Activated CD4-positive, alpha-beta T cell treated with anti-CD3 and anti-CD28 coated beads, Interleukin-2, amount 10 ng/mL, durations not matched to agents 7 days and 5 days (primary cell): ENCODE measurements at regions of chr11 and their contacts with region 1.

Region 1: DNA sequence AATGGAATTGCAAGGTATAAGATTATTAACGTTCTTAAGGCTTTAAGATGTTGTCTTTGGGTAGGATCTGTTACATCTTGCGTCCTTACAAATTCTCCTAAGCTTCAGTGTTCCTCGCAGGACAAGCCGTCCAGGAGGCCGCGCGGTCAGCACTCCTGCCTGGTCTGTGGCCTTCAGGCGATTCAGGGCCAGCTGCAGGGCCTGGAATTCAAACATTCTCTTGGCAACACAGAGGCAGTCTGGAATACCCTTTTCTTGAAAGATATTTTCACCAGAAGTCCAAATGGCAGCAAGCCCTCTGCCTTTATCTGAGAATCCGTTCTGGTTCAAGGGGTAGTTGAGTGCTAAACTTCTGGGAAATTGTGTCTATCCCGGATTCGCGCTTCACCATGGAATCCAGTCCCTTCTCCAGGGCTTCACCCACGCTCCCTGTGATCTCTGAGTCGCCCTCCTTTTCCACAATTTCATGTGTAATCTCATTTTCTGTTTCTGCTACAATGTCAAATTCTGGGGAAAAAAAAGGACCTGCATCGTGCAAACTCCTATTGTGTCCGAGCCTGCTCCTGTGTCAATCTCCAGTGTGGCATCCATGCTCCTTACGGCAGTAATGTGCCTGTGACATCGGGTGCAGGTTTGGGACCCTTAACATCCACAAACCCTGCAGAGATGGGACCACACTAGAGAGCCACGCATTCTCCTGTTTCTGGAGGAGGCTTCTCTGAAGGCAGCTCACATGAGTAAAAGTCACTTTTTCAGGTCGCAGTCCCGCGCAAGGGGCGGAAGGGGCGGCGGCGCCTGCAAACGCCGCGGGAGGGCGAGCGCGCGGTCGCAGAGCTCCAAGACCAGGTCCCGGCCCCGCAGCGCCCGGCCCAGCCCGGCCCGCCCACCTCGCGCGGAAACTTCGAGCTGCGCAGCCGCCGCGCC is 25.4 kb upstream of the SORL1 start:
- DNase-seq: peak; percentile 46
- H3K4me3 Mint-ChIP-seq: peak overlapping the region; percentile 53
- H3K27ac Mint-ChIP-seq: peak overlapping the region; percentile 71
- H3K4me1 Mint-ChIP-seq: peaks cover 51% of the 10 kb centered on the region
- H3K27me3 Mint-ChIP-seq: peaks cover 3% of the 10 kb centered on the region

Region 2: GRCh38 chr11:121441533-121441932 is 14.8 kb after region 1 on chr11:
- CTCF ChIA-PET with region 1: interaction called, 13 read pairs
- POLR2A ChIA-PET with region 1: no interaction called
- DNase-seq: no peak
- H3K4me3 Mint-ChIP-seq: no peak overlapping the region
- H3K27ac Mint-ChIP-seq: no peak overlapping the region
- H3K4me1 Mint-ChIP-seq: peaks cover 49% of the 10 kb centered on the region
- H3K27me3 Mint-ChIP-seq: no peaks in the 10 kb centered on the region

Region 3: DNA sequence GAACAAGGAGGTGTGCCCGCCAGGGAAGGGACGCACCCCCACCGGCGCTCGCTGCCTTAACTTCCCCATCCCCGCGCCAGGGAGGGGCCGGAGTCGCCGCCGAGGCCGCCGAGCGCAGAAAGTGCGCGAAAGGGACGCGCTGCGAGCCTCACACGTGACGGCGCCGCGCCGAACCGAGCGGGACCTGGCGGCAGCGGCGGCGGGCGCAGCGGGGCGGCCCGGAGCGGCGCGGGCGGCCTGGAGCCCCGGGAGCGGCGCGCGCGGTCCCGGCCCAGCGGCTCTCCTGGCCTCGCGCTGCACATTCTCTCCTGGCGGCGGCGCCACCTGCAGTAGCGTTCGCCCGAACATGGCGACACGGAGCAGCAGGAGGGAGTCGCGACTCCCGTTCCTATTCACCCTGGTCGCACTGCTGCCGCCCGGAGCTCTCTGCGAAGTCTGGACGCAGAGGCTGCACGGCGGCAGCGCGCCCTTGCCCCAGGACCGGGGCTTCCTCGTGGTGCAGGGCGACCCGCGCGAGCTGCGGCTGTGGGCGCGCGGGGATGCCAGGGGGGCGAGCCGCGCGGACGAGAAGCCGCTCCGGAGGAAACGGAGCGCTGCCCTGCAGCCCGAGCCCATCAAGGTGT is 25.4 kb after region 1 on chr11 and contains the start of gene SORL1:
- CTCF ChIA-PET with region 1: interaction called, 14 read pairs
- POLR2A ChIA-PET with region 1: no interaction called
- DNase-seq: peak; percentile 76
- H3K4me3 Mint-ChIP-seq: peak within 1 kb of the TSS; percentile 91
- H3K27ac Mint-ChIP-seq: peak within 1 kb of the TSS; percentile 94
- H3K4me1 Mint-ChIP-seq: peaks cover 73% of the 10 kb centered on the region
- H3K27me3 Mint-ChIP-seq: no peaks in the 10 kb centered on the region
- total RNA-seq, gene SORL1: 197 to 207 TPM